ENCODE measurements at regions of chr14 and their contacts with region 1.

Region 1: GRCh38 chr14:50860478-50861086 is 11.3 kb upstream of the ABHD12B start:
- DNase-seq: peak; percentile 82
- CTCF ChIP-seq: peak; percentile 67

Region 2: DNA sequence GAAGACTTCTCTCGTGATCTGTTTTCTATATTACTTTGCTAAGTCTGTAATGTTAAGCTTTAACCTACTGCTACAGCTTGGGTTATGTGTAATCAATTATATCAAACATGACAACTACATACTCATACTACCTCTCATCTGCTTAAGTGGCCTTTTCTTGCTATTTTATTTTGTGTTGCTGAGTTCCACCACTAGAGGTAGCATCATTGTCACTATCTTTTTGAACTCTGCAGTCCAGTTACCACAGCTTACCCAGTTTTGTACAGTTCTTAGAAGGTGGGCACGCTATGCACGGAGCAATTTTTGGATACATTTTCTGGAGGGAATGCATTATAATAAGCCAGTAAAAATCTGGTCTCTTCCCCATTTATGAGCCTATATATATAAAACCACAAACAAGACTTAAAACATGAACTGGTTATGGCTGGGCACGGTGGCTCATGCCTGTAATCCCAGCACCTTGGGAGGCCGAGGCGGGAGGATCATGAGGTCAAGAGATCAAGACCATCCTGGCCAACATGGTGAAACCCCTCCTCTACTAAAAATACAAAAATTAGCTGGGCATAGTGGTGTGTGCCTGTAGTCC is 240.9 kb before region 1 on chr14:
- in situ Hi-C with region 1: loop called (anchors 25 kb)
- DNase-seq: peak; percentile 43
- CTCF ChIP-seq: peak; percentile 26

Region 3: DNA sequence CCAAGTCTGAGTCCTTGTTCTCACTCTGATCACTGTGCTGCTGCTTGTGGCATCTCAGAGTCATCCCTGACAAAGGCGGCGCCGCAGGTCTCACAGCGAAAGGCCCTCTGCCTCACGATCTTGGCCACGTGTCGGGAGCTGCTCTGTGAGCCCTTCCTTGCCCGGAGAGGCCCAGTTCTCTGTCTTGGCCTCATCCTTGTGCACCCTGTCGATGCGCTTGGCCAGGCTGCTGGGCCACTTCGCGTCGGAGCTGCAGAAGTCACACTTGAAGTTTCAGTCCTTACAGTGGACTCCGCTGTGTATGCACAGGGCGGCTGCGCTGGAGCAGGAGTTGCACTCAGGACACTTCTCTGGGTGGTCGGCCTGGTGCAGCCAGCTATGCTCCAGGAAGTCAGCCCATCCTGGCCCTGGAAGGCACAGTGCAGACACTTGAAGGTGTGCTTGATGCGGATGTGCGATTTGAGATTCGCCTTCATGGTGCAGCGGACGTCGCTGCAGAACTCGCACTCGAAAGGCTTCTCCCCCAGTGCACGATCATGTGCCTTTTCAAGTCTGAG is 156.1 kb before region 1 on chr14:
- in situ Hi-C with region 1: no loop called
- DNase-seq: no peak
- CTCF ChIP-seq: no peak

Region 4: GRCh38 chr14:50785457-50786063 is 75.0 kb before region 1 on chr14:
- in situ Hi-C with region 1: loop called (anchors 5 kb)
- DNase-seq: no peak
- CTCF ChIP-seq: no peak